ENCODE measurements at regions of chr1 and their contacts with region 1.

Region 1: DNA sequence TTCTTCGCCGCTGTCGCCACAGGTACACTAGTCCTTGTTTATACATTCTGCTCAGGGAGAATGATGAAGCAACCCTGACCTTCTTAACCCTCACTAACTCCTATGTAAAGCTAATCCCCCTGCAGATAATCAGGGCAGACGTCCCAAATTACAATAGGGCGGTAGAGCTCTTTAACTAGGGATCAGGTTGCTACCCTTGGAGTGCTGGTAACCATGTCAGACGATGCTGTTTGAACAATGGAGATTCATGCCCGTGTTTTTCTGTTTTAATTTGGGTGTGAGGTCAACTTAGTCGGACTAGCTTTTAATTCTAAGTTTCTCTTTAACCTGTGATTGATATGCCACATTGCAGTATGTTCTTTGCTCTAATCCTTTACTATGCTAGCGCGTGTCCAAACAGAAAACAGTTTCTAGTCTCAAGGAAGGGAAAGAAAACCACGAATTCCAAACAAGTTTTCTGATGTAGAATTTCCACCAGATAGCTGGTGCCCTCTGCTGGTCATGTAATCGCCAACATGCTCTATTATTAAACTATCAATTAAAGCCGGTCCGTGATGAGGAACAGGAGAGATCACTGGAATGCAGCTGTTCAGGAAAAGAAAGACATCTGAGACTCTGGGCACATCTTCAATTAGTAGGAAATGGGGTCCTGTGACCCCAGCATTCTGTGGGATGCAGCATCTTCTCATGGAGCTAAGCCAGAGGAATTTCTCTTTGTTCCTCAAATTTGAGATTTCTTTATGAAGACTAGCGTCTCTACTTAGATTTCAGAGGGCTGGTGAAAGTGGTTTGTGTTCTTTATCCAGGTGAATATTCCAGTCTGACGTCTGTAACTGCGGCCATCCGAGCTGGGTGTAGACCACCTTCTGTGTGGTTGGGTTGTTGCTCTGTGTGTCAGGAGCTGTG is 18.3 kb upstream of the VAMP3 start:
- DNase-seq: peak; percentile 72
- H3K4me3 ChIP-seq: peak overlapping the region in 2 of 3 experiments; percentile 18 to 25
- H3K27ac ChIP-seq: no peak overlapping the region
- H3K4me1 ChIP-seq: no peaks in the 10 kb centered on the region
- H3K27me3 ChIP-seq: no peaks in the 10 kb centered on the region
- CTCF ChIP-seq: peak; percentile 68 to 77
- POLR2A ChIP-seq: no peak

Region 2: GRCh38 chr1:6969106-6969505 is 783.7 kb before region 1 on chr1:
- CTCF ChIA-PET with region 1: no interaction called
- POLR2A ChIA-PET with region 1: no interaction called
- dilution Hi-C with region 1: no loop called
- intact Hi-C with region 1: no loop called
- DNase-seq: no peak
- H3K4me3 ChIP-seq: no peak overlapping the region
- H3K27ac ChIP-seq: no peak overlapping the region
- H3K4me1 ChIP-seq: no peaks in the 10 kb centered on the region
- H3K27me3 ChIP-seq: no peaks in the 10 kb centered on the region
- CTCF ChIP-seq: no peak
- POLR2A ChIP-seq: no peak

Region 3: DNA sequence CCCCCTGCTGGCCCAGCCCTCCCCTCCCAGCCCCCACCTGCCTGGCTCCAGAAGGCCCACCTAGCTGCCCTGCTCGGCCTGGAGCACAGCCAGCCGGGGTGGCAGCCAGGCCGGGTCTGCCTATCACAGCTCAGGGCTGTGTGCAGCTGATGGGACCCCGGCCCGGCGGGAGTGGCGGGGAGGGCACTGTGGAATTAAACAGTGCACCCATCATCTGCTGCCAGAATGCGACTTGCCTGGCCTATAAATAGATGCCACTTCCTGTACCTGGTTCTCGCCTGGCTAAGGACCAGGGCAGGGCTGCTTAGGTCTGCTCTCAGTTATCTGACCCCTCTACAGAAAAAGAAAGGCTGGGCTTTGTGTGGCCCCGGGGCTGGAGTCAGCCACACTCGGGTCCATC is 79.9 kb before region 1 on chr1:
- CTCF ChIA-PET with region 1: interaction called, 674 read pairs
- POLR2A ChIA-PET with region 1: no interaction called
- dilution Hi-C with region 1: no loop called
- intact Hi-C with region 1: no loop called
- DNase-seq: no peak
- H3K4me3 ChIP-seq: no peak overlapping the region
- H3K27ac ChIP-seq: no peak overlapping the region
- H3K4me1 ChIP-seq: no peaks in the 10 kb centered on the region
- H3K27me3 ChIP-seq: no peaks in the 10 kb centered on the region
- CTCF ChIP-seq: no peak
- POLR2A ChIP-seq: no peak

Region 4: DNA sequence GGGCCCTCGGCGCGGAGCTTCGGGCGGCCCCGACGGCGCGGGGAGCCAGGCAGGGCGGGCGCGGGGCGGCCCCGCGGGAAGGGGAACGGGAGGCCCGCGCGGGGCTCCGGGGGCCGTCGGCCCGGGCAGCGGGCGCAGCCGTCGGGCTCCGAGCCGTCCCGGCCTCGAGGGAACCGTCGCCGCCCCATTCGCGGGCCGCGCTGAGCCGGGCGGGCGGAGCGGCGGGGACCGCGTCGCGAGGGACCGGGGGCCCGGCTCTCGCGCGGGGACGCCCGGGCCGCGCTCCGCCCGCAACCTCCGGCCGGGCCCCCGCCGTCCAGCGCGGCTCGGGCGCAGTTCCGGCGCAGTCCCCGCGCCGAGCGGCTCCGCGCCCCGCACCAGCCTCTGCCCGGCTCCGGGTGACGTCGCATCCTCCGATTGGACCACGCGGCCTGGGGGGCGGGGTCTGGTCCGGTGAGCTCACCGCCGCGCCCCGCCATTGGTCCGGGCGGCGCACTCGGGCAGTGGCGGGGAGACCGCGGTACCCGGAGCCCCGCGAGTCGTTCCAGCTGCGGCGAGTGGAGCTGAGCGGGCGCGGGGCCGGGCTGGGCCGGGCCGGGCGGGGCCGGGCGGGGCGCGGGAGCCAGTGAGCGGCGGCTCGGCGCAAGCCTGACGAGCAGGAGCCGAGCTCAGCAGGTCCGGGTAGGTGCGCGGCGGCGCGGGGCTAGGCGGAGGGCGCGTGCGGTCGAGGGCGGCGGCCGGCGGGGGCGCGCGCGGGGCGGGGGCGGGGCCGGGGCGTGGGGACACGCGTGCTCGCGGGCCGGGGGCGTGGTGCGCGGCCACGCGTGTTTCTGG is 48.3 kb before region 1 on chr1:
- CTCF ChIA-PET with region 1: interaction called, 23 read pairs
- POLR2A ChIA-PET with region 1: no interaction called
- dilution Hi-C with region 1: no loop called
- intact Hi-C with region 1: no loop called
- DNase-seq: peak; percentile 89
- H3K4me3 ChIP-seq: peak overlapping the region in 1 of 3 experiments; percentile 24
- H3K27ac ChIP-seq: no peak overlapping the region
- H3K4me1 ChIP-seq: no peaks in the 10 kb centered on the region
- H3K27me3 ChIP-seq: peaks cover 21 to 31% of the 10 kb centered on the region in 2 experiments
- CTCF ChIP-seq: no peak
- POLR2A ChIP-seq: no peak

Region 5: DNA sequence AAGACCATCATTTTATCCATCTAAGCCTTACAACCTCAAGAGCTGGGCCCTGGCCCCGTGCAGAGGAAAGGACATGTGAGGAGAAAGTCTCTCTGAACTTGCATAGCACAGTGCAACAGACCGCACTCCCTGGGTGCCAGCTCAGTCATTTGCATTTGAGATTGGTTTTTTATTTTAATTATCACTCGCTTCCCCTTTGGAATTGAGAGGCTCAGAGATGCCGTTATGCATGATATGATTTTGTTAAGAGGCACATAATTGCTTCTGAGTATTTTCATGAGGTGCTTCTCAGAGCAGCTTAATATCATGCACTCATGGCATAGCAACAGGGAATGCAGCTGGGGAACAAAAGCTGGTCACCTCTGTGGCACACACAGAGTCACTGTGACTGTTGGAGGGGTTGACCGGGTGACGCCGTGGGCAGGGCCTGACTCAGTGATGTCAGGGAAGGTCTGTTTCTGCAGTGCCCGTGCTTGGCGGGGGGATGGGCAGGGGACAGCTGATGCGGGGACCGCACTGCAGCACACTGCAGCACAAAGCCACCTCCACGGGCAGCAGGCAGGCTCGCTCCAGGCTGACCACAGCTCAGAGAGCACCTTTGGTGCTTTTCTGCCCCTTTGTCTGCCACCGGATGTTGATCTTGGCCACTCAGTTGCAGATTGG is 24.8 kb before region 1 on chr1:
- CTCF ChIA-PET with region 1: interaction called, 15 read pairs
- POLR2A ChIA-PET with region 1: no interaction called
- dilution Hi-C with region 1: no loop called
- intact Hi-C with region 1: no loop called
- DNase-seq: no peak
- H3K4me3 ChIP-seq: no peak overlapping the region
- H3K27ac ChIP-seq: no peak overlapping the region
- H3K4me1 ChIP-seq: peaks cover 8% of the 10 kb centered on the region
- H3K27me3 ChIP-seq: no peaks in the 10 kb centered on the region
- CTCF ChIP-seq: no peak
- POLR2A ChIP-seq: no peak

Region 6: DNA sequence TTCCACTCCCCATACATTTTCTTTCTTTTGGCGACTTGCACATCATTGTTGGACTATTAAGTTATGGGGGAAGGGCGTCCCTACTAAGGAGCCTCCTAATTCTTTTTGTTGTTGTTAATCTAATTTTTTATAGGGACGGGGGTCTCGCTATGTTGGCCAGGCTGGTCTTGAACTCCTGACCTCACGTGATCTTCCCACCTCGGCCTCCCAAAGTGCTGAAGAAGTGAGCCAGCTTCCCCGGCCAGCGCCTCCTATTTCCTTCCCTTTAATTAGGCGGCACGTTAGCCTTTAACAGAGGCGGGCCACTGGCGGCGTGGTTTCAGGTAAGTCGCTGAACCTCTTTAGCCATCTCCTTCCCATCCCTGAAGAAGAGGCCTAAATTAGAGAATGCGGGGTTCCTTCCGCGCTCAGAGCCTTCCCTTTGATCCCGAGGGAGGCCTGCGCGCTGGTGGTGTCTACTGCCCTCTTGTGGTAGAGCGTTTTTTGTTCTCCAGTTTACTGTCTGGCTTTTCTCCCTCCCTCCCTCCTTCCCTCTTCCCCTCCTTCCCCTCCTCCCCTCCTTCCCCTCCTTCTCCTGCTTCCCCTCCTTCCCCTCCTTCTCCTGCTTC is 149.8 kb after region 1 on chr1:
- CTCF ChIA-PET with region 1: interaction called, 6 read pairs
- POLR2A ChIA-PET with region 1: no interaction called
- dilution Hi-C with region 1: no loop called
- intact Hi-C with region 1: loop called (anchors 1 kb)
- DNase-seq: peak; percentile 58
- H3K4me3 ChIP-seq: no peak overlapping the region
- H3K27ac ChIP-seq: no peak overlapping the region
- H3K4me1 ChIP-seq: no peaks in the 10 kb centered on the region
- H3K27me3 ChIP-seq: peaks cover 0 to 3% of the 10 kb centered on the region in 2 experiments
- CTCF ChIP-seq: peak; percentile 59 to 80
- POLR2A ChIP-seq: no peak

Region 7: GRCh38 chr1:7930645-7931445 is 178.1 kb after region 1 on chr1:
- CTCF ChIA-PET with region 1: no interaction called
- POLR2A ChIA-PET with region 1: no interaction called
- dilution Hi-C with region 1: no loop called
- intact Hi-C with region 1: no loop called
- DNase-seq: no peak
- H3K4me3 ChIP-seq: no peak overlapping the region
- H3K27ac ChIP-seq: no peak overlapping the region
- H3K4me1 ChIP-seq: no peaks in the 10 kb centered on the region
- H3K27me3 ChIP-seq: peaks cover 12 to 15% of the 10 kb centered on the region in 2 experiments
- CTCF ChIP-seq: no peak
- POLR2A ChIP-seq: no peak

Region 8: DNA sequence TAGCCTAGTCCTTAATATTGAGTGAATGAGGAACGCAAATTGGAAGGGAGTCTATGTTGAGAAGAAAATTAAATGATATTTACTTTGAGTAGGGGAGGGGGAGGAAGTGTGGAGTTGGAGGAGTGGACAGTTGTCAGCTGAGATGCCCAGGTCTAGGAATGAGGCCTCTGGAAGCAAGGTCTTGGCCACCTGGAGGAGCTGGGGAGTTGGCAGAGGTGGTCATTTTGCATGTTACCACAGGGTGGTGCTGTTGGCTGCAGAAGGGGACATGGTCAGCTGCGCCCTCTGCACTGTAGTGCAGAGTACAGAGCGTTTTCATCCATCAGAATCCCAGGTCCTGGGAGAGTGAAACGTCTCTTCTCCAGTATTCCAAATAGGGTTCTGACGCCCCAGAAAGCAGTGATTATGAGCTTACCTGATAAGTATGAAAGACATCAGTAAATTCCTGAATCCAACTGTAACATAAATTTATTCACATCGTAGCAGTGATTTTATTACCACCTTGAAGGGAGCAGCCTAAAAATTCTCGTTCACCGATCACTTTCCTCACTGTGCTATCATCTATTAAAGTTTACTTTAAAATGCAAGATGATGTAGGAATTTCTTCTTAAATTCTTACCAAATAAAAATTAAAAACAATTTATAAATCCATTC is 222.6 kb after region 1 on chr1:
- CTCF ChIA-PET with region 1: no interaction called
- POLR2A ChIA-PET with region 1: no interaction called
- dilution Hi-C with region 1: no loop called
- intact Hi-C with region 1: no loop called
- DNase-seq: peak; percentile 81
- H3K4me3 ChIP-seq: no peak overlapping the region
- H3K27ac ChIP-seq: no peak overlapping the region
- H3K4me1 ChIP-seq: no peaks in the 10 kb centered on the region
- H3K27me3 ChIP-seq: no peaks in the 10 kb centered on the region
- CTCF ChIP-seq: peak; percentile 85 to 94
- POLR2A ChIP-seq: no peak

Measured in endothelial cell of umbilical vein (primary cell).